MCF 10A (cell line): ENCODE measurements at regions of chr17 and their contacts with region 1.

Region 1: GRCh38 chr17:76506408-76507349 is 5.5 kb upstream of the RHBDF2 start:
- DNase-seq: peak; percentile 74
- H3K4me3 Mint-ChIP-seq: no peak overlapping the region
- H3K27ac Mint-ChIP-seq: no peak overlapping the region
- H3K4me1 Mint-ChIP-seq: peaks cover 8% of the 10 kb centered on the region
- H3K27me3 Mint-ChIP-seq: peaks cover 14% of the 10 kb centered on the region
- CTCF ChIP-seq: peak; percentile 92

Region 2: GRCh38 chr17:76304226-76305134 is 202.2 kb before region 1 on chr17:
- CTCF ChIA-PET with region 1: no interaction called
- POLR2A ChIA-PET with region 1: no interaction called
- intact Hi-C with region 1: loop called (anchors 5 kb)
- DNase-seq: no peak
- H3K4me3 Mint-ChIP-seq: no peak overlapping the region
- H3K27ac Mint-ChIP-seq: no peak overlapping the region
- H3K4me1 Mint-ChIP-seq: no peaks in the 10 kb centered on the region
- H3K27me3 Mint-ChIP-seq: no peaks in the 10 kb centered on the region
- CTCF ChIP-seq: no peak

Region 3: DNA sequence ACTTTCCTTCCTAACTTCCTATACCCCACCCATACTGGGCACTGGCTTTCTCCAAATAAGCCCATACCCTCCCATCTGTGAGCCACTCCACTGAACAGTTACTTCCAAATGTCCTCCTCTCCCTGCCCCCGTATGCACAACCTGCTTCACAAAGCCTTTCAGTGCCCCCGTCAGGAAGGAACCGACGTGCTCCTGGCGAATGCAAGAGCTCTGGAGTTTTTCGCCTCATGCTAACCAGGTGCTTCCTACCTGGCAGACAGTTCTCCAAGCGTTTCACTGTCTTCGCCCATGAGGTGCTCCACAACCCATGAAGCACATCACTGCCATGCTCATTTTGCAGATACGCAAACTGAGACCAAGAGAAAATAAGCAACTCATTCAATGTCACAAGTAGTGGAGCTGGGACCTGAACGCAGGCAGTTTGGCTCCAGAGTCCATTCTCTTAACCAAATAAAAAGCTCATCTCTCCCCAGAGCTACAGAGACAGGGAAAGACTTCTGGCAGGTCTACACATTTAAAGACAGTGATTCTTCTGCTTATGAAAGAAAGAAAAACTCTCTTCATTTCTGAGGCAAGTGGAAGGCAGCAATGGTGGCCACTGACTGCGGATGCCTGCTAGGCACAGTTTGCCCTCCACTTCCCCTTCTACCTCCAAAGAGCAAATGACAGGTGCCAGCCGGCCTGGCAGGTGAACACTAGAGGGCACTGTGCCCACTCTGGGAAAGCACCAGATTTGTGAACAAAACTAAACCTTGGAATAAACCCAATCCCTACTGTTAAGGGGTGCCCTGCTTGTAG is 98.4 kb before region 1 on chr17:
- CTCF ChIA-PET with region 1: interaction called, 11 read pairs
- POLR2A ChIA-PET with region 1: no interaction called
- intact Hi-C with region 1: loop called (anchors 1 kb)
- DNase-seq: peak; percentile 75
- H3K4me3 Mint-ChIP-seq: no peak overlapping the region
- H3K27ac Mint-ChIP-seq: no peak overlapping the region
- H3K4me1 Mint-ChIP-seq: no peaks in the 10 kb centered on the region
- H3K27me3 Mint-ChIP-seq: no peaks in the 10 kb centered on the region
- CTCF ChIP-seq: peak; percentile 75

Region 4: GRCh38 chr17:76458580-76459490 is 47.8 kb before region 1 on chr17:
- CTCF ChIA-PET with region 1: interaction called, 134 read pairs
- POLR2A ChIA-PET with region 1: interaction called, 5 read pairs
- intact Hi-C with region 1: loop called (anchors 1 kb)
- DNase-seq: peak; percentile 72
- H3K4me3 Mint-ChIP-seq: no peak overlapping the region
- H3K27ac Mint-ChIP-seq: no peak overlapping the region
- H3K4me1 Mint-ChIP-seq: no peaks in the 10 kb centered on the region
- H3K27me3 Mint-ChIP-seq: no peaks in the 10 kb centered on the region
- CTCF ChIP-seq: peak; percentile 60

Region 5: DNA sequence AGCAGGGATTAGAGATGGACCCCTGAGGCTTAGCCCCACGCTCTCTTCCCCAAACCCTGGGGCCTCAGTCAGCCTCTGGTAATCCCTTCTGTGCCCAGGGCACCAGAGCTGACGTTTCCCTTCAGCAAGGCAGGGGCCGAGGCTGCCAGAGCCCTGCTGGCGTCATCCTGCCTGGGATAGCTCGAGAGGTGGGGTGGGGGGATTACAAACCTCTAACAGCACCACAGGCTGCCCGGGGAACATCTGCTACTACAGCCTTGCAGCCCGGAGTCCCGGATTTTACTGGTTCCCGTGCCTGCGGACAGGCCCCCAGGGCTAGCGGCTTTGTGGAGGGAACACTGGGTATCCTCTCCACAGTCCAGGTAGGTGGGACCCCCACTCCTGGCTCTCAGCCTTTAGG is 39.3 kb before region 1 on chr17 and contains the start of gene AANAT:
- CTCF ChIA-PET with region 1: interaction called, 134 read pairs
- POLR2A ChIA-PET with region 1: interaction called, 18 read pairs
- intact Hi-C with region 1: loop called (anchors 1 kb)
- DNase-seq: no peak
- H3K4me3 Mint-ChIP-seq: no peak within 1 kb of the TSS
- H3K27ac Mint-ChIP-seq: no peak within 1 kb of the TSS
- H3K4me1 Mint-ChIP-seq: no peaks in the 10 kb centered on the region
- H3K27me3 Mint-ChIP-seq: no peaks in the 10 kb centered on the region
- CTCF ChIP-seq: no peak
- total RNA-seq, gene AANAT: not detected in 2 replicates

Region 6: GRCh38 chr17:76474894-76475293 is 31.8 kb before region 1 on chr17:
- CTCF ChIA-PET with region 1: interaction called, 134 read pairs
- POLR2A ChIA-PET with region 1: interaction called, 3 read pairs
- intact Hi-C with region 1: no loop called
- DNase-seq: no peak
- H3K4me3 Mint-ChIP-seq: no peak overlapping the region
- H3K27ac Mint-ChIP-seq: no peak overlapping the region
- H3K4me1 Mint-ChIP-seq: no peaks in the 10 kb centered on the region
- H3K27me3 Mint-ChIP-seq: no peaks in the 10 kb centered on the region
- CTCF ChIP-seq: no peak

Region 7: DNA sequence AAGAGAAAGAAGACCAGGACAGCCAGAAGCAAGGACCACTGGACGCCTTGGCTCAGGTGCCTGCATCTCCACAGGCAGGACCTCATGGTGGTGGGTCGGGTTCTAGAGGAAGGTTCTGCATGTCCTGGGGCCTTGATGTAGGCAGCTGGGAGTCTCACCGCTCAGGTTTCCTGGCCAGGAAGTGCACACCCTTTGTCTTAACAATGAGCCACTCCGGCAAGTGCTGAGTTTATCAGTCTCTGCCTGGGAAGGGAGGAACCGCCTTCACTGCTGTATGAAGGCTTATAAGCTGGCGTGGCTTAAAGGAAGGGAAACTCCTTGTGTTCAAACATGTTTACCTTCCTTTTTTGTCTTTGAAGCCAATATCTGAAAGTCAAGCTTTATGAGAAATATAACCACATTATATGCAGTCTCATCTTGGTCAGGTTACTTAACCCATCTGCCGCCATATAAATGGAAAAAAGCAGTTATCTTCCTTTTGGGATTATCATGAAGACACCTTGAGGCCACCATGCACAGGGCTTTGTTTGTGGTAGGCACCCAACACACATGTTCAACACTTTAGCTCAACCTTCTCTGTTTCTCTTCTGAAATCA is 137.0 kb after region 1 on chr17 and contains the start of gene ST6GALNAC1:
- CTCF ChIA-PET with region 1: no interaction called
- POLR2A ChIA-PET with region 1: no interaction called
- intact Hi-C with region 1: no loop called
- DNase-seq: no peak
- H3K4me3 Mint-ChIP-seq: no peak within 1 kb of the TSS
- H3K27ac Mint-ChIP-seq: no peak within 1 kb of the TSS
- H3K4me1 Mint-ChIP-seq: peaks cover 22% of the 10 kb centered on the region
- H3K27me3 Mint-ChIP-seq: peaks cover 20% of the 10 kb centered on the region
- CTCF ChIP-seq: no peak
- total RNA-seq, gene ST6GALNAC1: not detected in 2 replicates